Activated CD4-positive, alpha-beta T cell treated with anti-CD3 and anti-CD28 coated beads for 36 hours (primary cell): ENCODE measurements at regions of chr1 and their contacts with region 1.

Region 1: DNA sequence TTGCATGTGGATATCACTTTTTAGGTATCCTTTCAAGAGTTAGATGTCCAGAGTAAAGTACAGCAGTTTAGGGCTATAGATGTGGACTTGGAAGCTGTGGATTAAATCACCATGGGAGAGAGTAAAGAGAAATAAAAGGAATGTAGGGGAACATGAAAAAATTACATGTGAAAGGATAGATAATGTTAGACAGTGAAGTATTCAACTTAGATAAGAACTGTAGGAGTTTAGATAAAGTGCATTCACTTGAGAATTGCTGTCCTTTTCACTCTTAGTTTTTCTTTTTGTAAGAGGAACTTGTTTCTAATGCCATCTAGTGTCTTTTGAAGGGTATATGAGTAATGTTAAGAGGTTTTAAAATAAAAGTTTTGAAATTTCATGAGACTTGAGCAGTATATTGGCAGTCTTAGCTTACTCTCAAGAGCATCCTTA is 40.1 kb downstream of the MAST2 start:
- DNase-seq: no peak
- ATAC-seq: peak; percentile 63
- H3K4me3 Mint-ChIP-seq: no peak overlapping the region
- H3K27ac Mint-ChIP-seq: no peak overlapping the region
- H3K4me1 Mint-ChIP-seq: peaks cover 12% of the 10 kb centered on the region
- H3K27me3 Mint-ChIP-seq: no peaks in the 10 kb centered on the region

Region 2: DNA sequence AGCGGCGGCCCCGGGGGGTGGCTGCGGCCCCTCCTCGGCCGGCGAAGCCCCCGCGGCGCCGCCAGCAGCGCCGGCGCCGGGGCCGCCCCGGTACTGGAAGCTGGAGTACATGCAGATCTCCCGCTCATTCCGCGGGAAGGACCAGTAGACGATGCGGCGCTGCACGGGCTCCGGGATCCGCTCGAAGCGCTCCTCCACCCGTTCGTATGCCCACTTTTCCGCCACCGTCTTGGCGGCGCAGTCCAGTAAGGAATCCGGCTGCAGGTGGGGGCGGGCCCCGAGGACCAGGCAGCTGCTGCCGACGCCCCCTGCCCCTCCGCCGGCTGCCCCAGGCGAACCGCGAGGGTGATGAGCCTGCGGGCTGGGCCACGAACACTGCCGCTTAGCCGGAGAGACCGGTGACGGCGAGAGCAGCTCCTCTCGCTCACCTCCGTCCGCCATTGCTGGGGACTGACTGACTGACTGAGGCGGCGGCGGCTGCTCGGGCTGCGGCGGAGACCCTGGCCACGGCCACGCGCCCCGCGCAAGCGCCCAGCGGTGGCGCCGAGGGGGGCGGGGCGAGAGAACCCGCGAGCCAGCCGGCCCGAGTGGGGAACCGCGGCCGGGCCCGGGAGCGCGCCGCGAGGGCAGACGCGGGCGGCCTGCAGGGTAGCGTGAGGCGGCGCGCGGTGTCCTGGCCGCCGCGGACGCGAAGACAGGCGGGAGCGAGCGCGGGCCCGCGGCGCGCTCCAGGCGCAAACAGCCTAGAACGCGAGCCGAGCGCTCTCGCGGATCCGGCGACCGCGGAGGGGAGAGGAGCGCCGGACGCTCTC is 637.4 kb before region 1 on chr1 and contains the start of gene ZSWIM5:
- CTCF ChIA-PET with region 1: no interaction called
- POLR2A ChIA-PET with region 1: no interaction called
- intact Hi-C with region 1: loop called in 1 of 2 experiments (anchors 10 kb)
- DNase-seq: peak; percentile 75
- ATAC-seq: peak; percentile 80
- H3K4me3 Mint-ChIP-seq: peak within 1 kb of the TSS; percentile 82
- H3K27ac Mint-ChIP-seq: peak within 1 kb of the TSS; percentile 87
- H3K4me1 Mint-ChIP-seq: peaks cover 33% of the 10 kb centered on the region
- H3K27me3 Mint-ChIP-seq: peaks cover 18% of the 10 kb centered on the region
- total RNA-seq, gene ZSWIM5: 0.63 to 0.69 TPM

Region 3: GRCh38 chr1:45654540-45655280 is 188.8 kb before region 1 on chr1:
- CTCF ChIA-PET with region 1: interaction called, 5 read pairs
- POLR2A ChIA-PET with region 1: no interaction called
- intact Hi-C with region 1: loop called (anchors 5 to 10 kb)
- DNase-seq: peak; percentile 23
- ATAC-seq: peak; percentile 99
- H3K4me3 Mint-ChIP-seq: no peak overlapping the region
- H3K27ac Mint-ChIP-seq: peak overlapping the region; percentile 2
- H3K4me1 Mint-ChIP-seq: peaks cover 15% of the 10 kb centered on the region
- H3K27me3 Mint-ChIP-seq: no peaks in the 10 kb centered on the region

Region 4: DNA sequence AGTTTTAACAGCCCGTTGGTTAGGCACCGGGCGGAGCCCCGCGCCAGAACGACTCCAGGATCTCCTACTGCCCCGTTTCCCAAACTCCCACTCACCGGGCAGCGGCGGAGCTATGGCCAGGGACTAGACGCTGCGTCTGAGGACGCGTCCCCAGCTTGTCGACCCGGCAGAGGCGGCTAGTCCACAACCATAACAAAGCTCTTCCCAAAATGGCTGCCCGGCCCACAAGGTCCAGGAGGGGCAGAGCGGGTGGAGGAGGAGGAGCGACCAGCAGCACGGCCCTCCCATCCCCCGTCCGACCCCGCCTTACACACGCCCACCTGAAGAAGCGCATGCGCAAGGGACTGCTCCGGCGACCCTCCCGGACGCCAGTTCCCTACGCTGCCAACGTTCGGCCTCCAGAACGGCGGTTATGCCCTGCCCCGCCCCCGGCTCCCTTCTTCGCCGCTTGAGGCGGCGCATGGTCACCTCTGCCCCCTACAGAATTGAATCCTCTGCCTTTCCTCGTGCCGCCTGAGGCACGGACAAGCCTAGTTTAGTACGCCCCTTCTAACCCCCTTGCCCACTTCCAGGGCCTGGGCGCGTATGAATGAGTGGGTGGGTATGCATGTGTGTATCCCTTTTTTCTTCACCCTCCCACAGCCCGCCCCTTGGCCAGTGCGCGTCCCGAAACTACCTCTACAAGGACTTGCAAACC is 157.0 kb before region 1 on chr1 and contains the start of gene GPBP1L1:
- CTCF ChIA-PET with region 1: no interaction called
- POLR2A ChIA-PET with region 1: no interaction called
- intact Hi-C with region 1: no loop called
- DNase-seq: peak; percentile 99
- ATAC-seq: peak; percentile 73
- H3K4me3 Mint-ChIP-seq: peak within 1 kb of the TSS; percentile 87
- H3K27ac Mint-ChIP-seq: peak within 1 kb of the TSS; percentile 95
- H3K4me1 Mint-ChIP-seq: peaks cover 52% of the 10 kb centered on the region
- H3K27me3 Mint-ChIP-seq: no peaks in the 10 kb centered on the region
- total RNA-seq, gene GPBP1L1: 101 to 112 TPM

Region 5: GRCh38 chr1:45750298-45751038 is 93.0 kb before region 1 on chr1 and contains the start of gene IPP:
- CTCF ChIA-PET with region 1: no interaction called
- POLR2A ChIA-PET with region 1: no interaction called
- intact Hi-C with region 1: loop called in 1 of 2 experiments (anchors 5 kb)
- DNase-seq: peak; percentile 97
- ATAC-seq: peak; percentile 99
- H3K4me3 Mint-ChIP-seq: peak within 1 kb of the TSS; percentile 93
- H3K27ac Mint-ChIP-seq: peak within 1 kb of the TSS; percentile 95
- H3K4me1 Mint-ChIP-seq: peaks cover 27% of the 10 kb centered on the region
- H3K27me3 Mint-ChIP-seq: no peaks in the 10 kb centered on the region
- total RNA-seq, gene IPP: 11.6 to 21.8 TPM

Region 6: GRCh38 chr1:45803301-45803780 is 40.1 kb before region 1 on chr1 and contains the start of gene MAST2:
- CTCF ChIA-PET with region 1: no interaction called
- POLR2A ChIA-PET with region 1: interaction called, 7 read pairs
- intact Hi-C with region 1: loop called in 1 of 2 experiments (anchors 2 kb)
- DNase-seq: peak; percentile 92
- ATAC-seq: peak; percentile 96
- H3K4me3 Mint-ChIP-seq: peak within 1 kb of the TSS; percentile 98
- H3K27ac Mint-ChIP-seq: peak within 1 kb of the TSS; percentile 82
- H3K4me1 Mint-ChIP-seq: peaks cover 27% of the 10 kb centered on the region
- H3K27me3 Mint-ChIP-seq: no peaks in the 10 kb centered on the region
- total RNA-seq, gene MAST2: 20.1 to 22.9 TPM

Region 7: GRCh38 chr1:45864167-45865106 is 20.9 kb after region 1 on chr1:
- CTCF ChIA-PET with region 1: no interaction called
- POLR2A ChIA-PET with region 1: no interaction called
- intact Hi-C with region 1: loop called in 1 of 2 experiments (anchors 2 kb)
- DNase-seq: no peak
- ATAC-seq: no peak
- H3K4me3 Mint-ChIP-seq: no peak overlapping the region
- H3K27ac Mint-ChIP-seq: peak overlapping the region; percentile 4
- H3K4me1 Mint-ChIP-seq: peaks cover 47% of the 10 kb centered on the region
- H3K27me3 Mint-ChIP-seq: no peaks in the 10 kb centered on the region